Endothelial cell of umbilical vein (primary cell): ENCODE measurements at regions of chr3 and their contacts with region 1.

Region 1: GRCh38 chr3:80733522-80734176 is 965.9 kb upstream of the ROBO1 start:
- DNase-seq: peak; percentile 100
- H3K4me3 ChIP-seq: peak overlapping the region in 1 of 3 experiments; percentile 5
- H3K27ac ChIP-seq: peak overlapping the region; percentile 98
- H3K4me1 ChIP-seq: peaks cover 47% of the 10 kb centered on the region
- H3K27me3 ChIP-seq: no peaks in the 10 kb centered on the region
- CTCF ChIP-seq: no peak
- POLR2A ChIP-seq: peak; percentile 82

Region 2: GRCh38 chr3:79846148-79846933 is 887.3 kb before region 1 on chr3:
- CTCF ChIA-PET with region 1: no interaction called
- POLR2A ChIA-PET with region 1: no interaction called
- dilution Hi-C with region 1: no loop called
- intact Hi-C with region 1: loop called (anchors 1 kb)
- DNase-seq: no peak
- H3K4me3 ChIP-seq: no peak overlapping the region
- H3K27ac ChIP-seq: no peak overlapping the region
- H3K4me1 ChIP-seq: peaks cover 22% of the 10 kb centered on the region
- H3K27me3 ChIP-seq: no peaks in the 10 kb centered on the region
- CTCF ChIP-seq: peak; percentile 17 to 18
- POLR2A ChIP-seq: no peak

Region 3: GRCh38 chr3:79872504-79873159 is 861.0 kb before region 1 on chr3:
- CTCF ChIA-PET with region 1: no interaction called
- POLR2A ChIA-PET with region 1: no interaction called
- dilution Hi-C with region 1: no loop called
- intact Hi-C with region 1: loop called (anchors 1 kb)
- DNase-seq: peak; percentile 96
- H3K4me3 ChIP-seq: no peak overlapping the region
- H3K27ac ChIP-seq: peak overlapping the region; percentile 80
- H3K4me1 ChIP-seq: peaks cover 24% of the 10 kb centered on the region
- H3K27me3 ChIP-seq: no peaks in the 10 kb centered on the region
- CTCF ChIP-seq: no peak
- POLR2A ChIP-seq: peak; percentile 48

Region 4: GRCh38 chr3:80331494-80332170 is 402.0 kb before region 1 on chr3:
- CTCF ChIA-PET with region 1: no interaction called
- POLR2A ChIA-PET with region 1: no interaction called
- dilution Hi-C with region 1: no loop called
- intact Hi-C with region 1: no loop called
- DNase-seq: no peak
- H3K4me3 ChIP-seq: no peak overlapping the region
- H3K27ac ChIP-seq: no peak overlapping the region
- H3K4me1 ChIP-seq: no peaks in the 10 kb centered on the region
- H3K27me3 ChIP-seq: no peaks in the 10 kb centered on the region
- CTCF ChIP-seq: no peak
- POLR2A ChIP-seq: no peak

Region 5: DNA sequence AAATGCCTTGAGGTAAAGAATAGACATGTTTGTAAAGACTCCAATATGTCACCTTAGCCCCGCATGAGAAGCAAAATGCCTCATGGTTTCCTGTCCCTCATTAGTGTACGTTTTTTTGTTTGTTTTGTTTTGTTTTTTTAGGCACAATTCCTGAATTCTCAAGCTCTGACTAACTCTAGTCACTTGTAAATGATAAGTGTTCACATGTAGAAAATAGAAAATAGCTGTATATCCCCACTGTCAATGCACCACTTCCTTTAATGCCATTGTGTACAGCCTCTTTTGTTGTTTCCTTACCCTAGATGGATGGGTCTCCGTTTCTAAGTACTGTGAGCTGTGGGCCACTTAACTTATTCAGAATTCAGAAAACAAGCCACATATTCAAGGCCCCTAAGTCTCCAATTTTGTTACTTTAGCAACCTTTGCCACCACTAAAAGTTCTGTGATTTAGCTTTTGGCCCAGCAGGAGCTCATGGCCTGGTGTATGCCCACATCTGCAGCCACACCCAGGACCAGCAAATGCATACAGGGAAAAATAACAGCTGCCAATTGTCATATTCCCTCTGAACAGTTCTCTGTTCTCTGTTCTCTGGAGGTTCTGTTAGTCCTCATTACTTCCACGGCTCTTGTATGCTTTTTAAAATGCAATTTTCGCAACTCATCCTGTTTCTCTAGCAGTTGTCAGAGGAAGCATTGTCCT is 372.3 kb after region 1 on chr3:
- CTCF ChIA-PET with region 1: no interaction called
- POLR2A ChIA-PET with region 1: no interaction called
- dilution Hi-C with region 1: no loop called
- intact Hi-C with region 1: loop called (anchors 1 kb)
- DNase-seq: peak; percentile 94
- H3K4me3 ChIP-seq: no peak overlapping the region
- H3K27ac ChIP-seq: peak overlapping the region; percentile 93
- H3K4me1 ChIP-seq: peaks cover 20% of the 10 kb centered on the region
- H3K27me3 ChIP-seq: no peaks in the 10 kb centered on the region
- CTCF ChIP-seq: no peak
- POLR2A ChIP-seq: no peak

Region 6: DNA sequence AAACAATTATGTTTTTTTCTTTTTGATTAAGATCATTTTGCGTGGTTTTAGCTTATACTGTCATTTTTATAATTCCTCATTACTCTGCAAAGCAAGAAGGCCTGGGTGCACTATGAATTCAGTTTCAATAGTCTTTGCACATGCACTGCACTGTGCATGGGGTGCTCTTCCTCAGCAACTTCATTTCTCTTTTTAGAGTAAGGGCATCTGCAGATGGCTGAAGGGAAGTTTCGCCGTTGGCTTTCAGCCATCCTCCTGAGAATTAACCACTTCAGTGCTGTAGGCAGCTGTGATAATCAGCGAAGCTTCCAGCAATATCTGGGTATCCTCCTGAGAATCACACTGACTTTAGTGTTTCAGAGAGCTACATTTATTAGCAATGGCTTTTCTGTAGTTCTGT is 743.0 kb after region 1 on chr3:
- CTCF ChIA-PET with region 1: no interaction called
- POLR2A ChIA-PET with region 1: no interaction called
- dilution Hi-C with region 1: no loop called
- intact Hi-C with region 1: loop called (anchors 1 kb)
- DNase-seq: no peak
- H3K4me3 ChIP-seq: no peak overlapping the region
- H3K27ac ChIP-seq: no peak overlapping the region
- H3K4me1 ChIP-seq: peaks cover 26% of the 10 kb centered on the region
- H3K27me3 ChIP-seq: no peaks in the 10 kb centered on the region
- CTCF ChIP-seq: no peak
- POLR2A ChIP-seq: no peak

Region 7: GRCh38 chr3:81743096-81744025 is 1009.7 kb after region 1 on chr3:
- CTCF ChIA-PET with region 1: no interaction called
- POLR2A ChIA-PET with region 1: no interaction called
- dilution Hi-C with region 1: no loop called
- intact Hi-C with region 1: loop called (anchors 2 kb)
- DNase-seq: peak; percentile 97
- H3K4me3 ChIP-seq: peak overlapping the region in 1 of 3 experiments; percentile 12
- H3K27ac ChIP-seq: peak overlapping the region; percentile 98
- H3K4me1 ChIP-seq: peaks cover 46% of the 10 kb centered on the region
- H3K27me3 ChIP-seq: no peaks in the 10 kb centered on the region
- CTCF ChIP-seq: no peak
- POLR2A ChIP-seq: peak; percentile 50